SK-MEL-5 (cell line): ENCODE measurements at regions of chr2 and their contacts with region 1.

Region 1: GRCh38 chr2:177164584-177165052 is 48.0 kb upstream of the HNRNPA3 start:
- DNase-seq: peak; percentile 90

Region 2: GRCh38 chr2:177229448-177230242 is 65.0 kb after region 1 on chr2:
- in situ Hi-C with region 1: no loop called
- DNase-seq: no peak

Region 3: DNA sequence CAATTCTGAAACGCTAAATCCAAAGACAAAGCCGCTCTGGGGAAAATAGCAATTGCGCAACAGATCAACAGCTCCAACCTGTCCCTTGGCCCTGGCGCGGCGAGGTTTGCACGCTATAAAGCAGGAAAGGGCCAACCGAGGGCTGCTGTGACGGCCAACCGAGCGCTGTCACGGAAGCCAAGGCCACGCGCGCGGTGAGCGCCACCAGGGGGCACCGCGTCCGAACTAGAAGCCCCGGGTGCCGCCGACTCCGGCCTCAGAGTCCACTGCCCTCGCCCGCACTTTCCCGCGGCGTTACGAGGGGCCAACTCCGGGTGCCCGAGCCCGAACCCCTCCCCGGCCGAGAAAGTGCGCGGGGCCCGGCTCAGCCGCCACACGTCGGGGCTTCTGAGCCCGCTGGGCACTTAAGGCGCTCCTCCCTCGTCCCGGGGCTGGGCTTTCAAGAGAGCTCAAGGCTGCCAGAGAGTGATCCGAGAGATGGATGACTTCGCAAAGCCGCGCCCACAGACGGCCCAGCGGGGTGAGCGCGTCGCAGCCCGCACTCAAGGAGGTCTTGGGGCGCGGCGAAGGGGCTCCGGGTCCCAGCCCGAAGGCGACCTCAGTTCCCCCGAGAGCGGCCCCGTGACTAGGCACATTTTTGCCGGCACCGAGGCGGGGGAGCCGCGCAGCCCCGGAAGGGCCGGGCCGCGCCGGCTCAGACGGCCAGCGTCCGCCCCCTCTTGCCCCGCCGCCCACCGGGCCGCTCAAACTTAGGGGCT is 99.0 kb after region 1 on chr2:
- in situ Hi-C with region 1: loop called (anchors 10 kb)
- DNase-seq: peak; percentile 96

Region 4: DNA sequence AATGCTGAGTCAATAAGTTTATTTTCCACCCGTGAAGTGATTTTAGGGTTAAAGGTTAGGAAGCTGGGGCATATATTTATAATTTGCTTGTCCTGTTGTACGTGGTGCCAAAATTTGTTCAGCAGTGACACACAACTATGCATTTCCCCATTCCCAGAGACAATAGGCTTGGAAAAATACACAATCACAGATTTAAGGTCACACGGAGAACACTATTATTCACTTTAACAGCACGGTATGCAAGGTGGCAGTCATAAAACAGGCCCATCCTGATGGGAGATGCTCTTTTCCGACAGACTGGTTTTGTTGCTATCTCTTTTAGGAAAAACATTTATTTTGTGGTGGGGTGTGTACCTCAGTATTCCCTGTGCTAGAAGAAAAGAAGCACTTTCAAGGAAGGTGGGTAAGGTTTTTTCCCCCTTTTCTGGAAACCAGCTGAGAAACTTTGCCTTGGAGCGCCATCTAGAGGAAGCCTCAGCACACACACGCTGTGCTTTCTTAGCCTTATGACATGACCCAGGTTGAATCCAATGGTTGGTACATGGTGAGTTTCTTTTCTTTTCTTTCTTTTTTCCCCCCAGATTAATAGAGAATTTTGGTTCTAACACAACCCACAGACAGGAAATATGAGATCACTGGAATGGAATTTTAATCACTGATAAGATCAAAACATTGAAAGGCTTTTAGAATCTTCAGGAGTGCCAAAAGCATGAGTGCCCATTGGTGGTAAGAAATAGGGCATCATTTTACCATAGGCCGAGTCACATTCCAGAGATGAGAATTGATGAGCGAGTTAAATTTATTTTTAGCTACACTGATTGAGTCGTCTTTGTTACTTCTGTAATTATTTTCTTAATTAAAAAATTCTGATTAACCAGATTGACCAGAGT is 560.0 kb after region 1 on chr2:
- in situ Hi-C with region 1: loop called (anchors 25 kb)
- DNase-seq: peak; percentile 64